Activated T-helper 2 cell treated with anti-CD3 and anti-CD28 coated beads, Interferon-gamma antibody, Interleukin-2, Interleukin-4, amounts not matched to agents 10 μg/mL and 5 μg/mL and 100 μg/mL, durations not matched to agents 14 hours and 24 hours and 36 hours (primary cell): ENCODE measurements at regions of chr1 and their contacts with region 1.

Region 1: DNA sequence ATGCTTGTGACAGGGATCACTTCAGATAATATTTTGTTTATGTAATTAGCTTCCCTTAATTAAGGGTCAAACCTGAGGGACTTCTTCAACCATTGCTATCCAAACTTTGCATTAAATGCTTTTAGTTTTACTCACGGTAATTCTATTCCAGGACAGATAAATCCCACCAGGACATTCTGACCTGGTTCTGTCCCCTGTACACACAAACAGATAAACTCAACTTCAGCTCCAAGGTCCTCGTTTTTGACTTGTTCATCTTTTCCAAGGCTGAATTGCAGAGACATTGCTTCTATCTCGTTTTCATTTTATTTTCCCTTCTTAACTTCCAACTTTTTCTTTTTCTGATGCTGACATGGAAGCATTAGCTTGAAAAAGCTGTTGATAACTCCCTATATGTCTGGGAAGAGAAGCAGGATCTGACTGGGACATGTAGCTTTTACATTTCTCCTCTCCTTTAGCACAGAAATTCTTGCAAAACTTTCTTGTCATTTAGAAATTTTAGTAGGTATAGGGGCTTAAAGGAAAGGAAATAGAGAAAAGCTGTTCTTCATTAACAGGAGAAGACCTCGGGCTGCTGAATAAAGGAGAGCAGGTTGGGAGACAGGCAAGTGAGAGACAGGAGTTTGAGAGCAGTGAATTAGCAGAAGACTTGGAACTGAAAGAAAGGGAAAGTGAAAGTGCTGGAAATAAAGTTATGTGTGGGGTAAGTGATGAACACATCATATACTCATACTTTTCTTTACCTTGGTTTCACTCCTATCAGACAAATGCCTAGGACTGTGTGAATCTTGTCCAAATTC is 231.7 kb upstream of the B3GALT2 start:
- DNase-seq: no peak
- H3K4me3 Mint-ChIP-seq: peak overlapping the region; percentile 60
- H3K27ac Mint-ChIP-seq: peak overlapping the region; percentile 54
- H3K4me1 Mint-ChIP-seq: peaks cover 46% of the 10 kb centered on the region
- H3K27me3 Mint-ChIP-seq: no peaks in the 10 kb centered on the region

Region 2: GRCh38 chr1:193054169-193054675 is 363.9 kb before region 1 on chr1:
- intact Hi-C with region 1: no loop called
- DNase-seq: no peak
- H3K4me3 Mint-ChIP-seq: no peak overlapping the region
- H3K27ac Mint-ChIP-seq: no peak overlapping the region
- H3K4me1 Mint-ChIP-seq: peaks cover 33% of the 10 kb centered on the region
- H3K27me3 Mint-ChIP-seq: no peaks in the 10 kb centered on the region

Region 3: DNA sequence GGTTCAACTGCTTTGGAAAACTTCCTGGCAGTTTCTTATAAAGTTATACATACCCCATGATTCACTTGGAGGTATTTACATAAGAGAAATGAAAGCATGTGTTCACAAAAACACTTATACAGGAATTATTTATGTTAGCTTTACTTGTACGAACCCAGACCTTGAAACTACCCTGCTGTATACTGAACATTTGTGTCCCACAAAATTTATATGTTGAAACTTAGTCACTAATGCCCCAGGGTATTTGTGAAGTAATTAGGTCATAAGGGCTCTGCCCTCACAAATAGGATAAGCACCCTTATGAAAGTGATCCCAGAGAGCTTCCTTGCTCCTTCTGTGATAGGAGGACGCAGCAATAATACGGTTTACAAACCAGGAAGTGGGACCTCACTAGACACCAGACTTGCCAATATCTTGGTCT is 189.0 kb before region 1 on chr1:
- intact Hi-C with region 1: no loop called
- DNase-seq: no peak
- H3K4me3 Mint-ChIP-seq: no peak overlapping the region
- H3K27ac Mint-ChIP-seq: no peak overlapping the region
- H3K4me1 Mint-ChIP-seq: no peaks in the 10 kb centered on the region
- H3K27me3 Mint-ChIP-seq: no peaks in the 10 kb centered on the region

Region 4: GRCh38 chr1:193456811-193457280 is 38.7 kb after region 1 on chr1:
- intact Hi-C with region 1: loop called (anchors 2 kb)
- DNase-seq: no peak
- H3K4me3 Mint-ChIP-seq: no peak overlapping the region
- H3K27ac Mint-ChIP-seq: no peak overlapping the region
- H3K4me1 Mint-ChIP-seq: peaks cover 25% of the 10 kb centered on the region
- H3K27me3 Mint-ChIP-seq: no peaks in the 10 kb centered on the region

Region 5: DNA sequence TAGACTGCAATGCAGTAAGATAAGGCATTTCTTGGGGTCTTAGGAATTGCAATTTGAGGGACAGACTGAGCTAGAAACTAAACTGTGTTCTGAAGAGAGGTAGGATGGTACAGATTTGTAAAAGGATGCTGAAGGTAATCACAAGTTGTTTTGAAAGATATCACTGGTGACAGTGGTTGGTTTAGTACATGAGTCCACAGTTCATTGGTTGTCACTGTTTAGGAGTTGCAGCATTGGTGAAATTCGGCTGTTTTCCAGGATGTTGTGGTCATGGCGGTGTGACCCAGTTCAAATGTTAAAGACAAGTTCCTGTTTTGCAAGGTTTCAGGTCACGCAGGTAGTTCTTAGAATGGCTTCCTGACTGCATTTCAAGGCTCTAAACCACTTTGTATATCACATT is 61.0 kb after region 1 on chr1:
- intact Hi-C with region 1: loop called (anchors 1 kb)
- DNase-seq: peak; percentile 83
- H3K4me3 Mint-ChIP-seq: no peak overlapping the region
- H3K27ac Mint-ChIP-seq: peak overlapping the region; percentile 90
- H3K4me1 Mint-ChIP-seq: peaks cover 54% of the 10 kb centered on the region
- H3K27me3 Mint-ChIP-seq: no peaks in the 10 kb centered on the region

Region 6: GRCh38 chr1:193498088-193498655 is 80.0 kb after region 1 on chr1:
- intact Hi-C with region 1: no loop called
- DNase-seq: no peak
- H3K4me3 Mint-ChIP-seq: no peak overlapping the region
- H3K27ac Mint-ChIP-seq: no peak overlapping the region
- H3K4me1 Mint-ChIP-seq: peaks cover under 1% of the 10 kb centered on the region
- H3K27me3 Mint-ChIP-seq: no peaks in the 10 kb centered on the region

Region 7: DNA sequence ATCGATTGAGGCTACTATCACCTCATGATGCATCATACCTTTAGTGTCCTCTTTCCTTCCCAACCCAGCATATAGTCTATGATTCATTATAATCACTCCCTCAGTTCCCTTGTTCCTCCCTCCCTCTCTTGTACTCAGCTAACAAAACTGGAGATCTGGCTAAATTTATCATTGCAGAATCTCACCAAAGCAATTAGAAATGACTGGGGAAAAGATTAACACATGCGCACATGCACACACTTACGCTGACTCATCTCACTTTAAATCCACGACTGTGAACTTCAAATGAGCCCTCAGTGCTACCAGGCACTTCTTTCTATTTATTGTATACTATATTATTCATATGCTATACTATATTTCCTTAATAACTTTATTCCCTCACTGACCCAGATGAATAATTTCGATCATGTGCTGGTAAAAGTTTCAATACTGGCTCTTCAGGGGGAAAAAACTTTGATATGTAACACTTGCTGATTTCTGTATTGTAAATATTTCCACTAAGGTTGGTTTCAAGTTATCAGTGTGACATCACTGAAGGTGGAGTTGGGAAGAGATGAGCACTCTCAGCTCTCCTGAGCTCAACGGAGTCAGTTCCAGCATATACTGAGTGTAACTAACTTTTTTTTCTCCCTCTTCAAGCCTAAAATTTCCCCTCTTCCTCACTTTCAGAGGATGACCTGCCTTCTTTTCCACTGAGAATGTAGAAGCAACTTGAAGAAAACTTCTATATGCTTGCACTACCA is 382.0 kb after region 1 on chr1:
- intact Hi-C with region 1: loop called (anchors 5 kb)
- DNase-seq: no peak
- H3K4me3 Mint-ChIP-seq: no peak overlapping the region
- H3K27ac Mint-ChIP-seq: peak overlapping the region; percentile 5
- H3K4me1 Mint-ChIP-seq: peaks cover 13% of the 10 kb centered on the region
- H3K27me3 Mint-ChIP-seq: no peaks in the 10 kb centered on the region

Region 8: GRCh38 chr1:194102606-194103005 is 684.5 kb after region 1 on chr1:
- intact Hi-C with region 1: loop called (anchors 10 kb)
- DNase-seq: no peak
- H3K4me3 Mint-ChIP-seq: no peak overlapping the region
- H3K27ac Mint-ChIP-seq: no peak overlapping the region
- H3K4me1 Mint-ChIP-seq: no peaks in the 10 kb centered on the region
- H3K27me3 Mint-ChIP-seq: no peaks in the 10 kb centered on the region

Region 9: GRCh38 chr1:194295685-194296084 is 877.5 kb after region 1 on chr1:
- intact Hi-C with region 1: loop called (anchors 10 kb)
- DNase-seq: no peak
- H3K4me3 Mint-ChIP-seq: no peak overlapping the region
- H3K27ac Mint-ChIP-seq: no peak overlapping the region
- H3K4me1 Mint-ChIP-seq: peaks cover 17% of the 10 kb centered on the region
- H3K27me3 Mint-ChIP-seq: no peaks in the 10 kb centered on the region